AG04450 (cell line): ENCODE measurements at regions of chr3 and their contacts with region 1.

Region 1: DNA sequence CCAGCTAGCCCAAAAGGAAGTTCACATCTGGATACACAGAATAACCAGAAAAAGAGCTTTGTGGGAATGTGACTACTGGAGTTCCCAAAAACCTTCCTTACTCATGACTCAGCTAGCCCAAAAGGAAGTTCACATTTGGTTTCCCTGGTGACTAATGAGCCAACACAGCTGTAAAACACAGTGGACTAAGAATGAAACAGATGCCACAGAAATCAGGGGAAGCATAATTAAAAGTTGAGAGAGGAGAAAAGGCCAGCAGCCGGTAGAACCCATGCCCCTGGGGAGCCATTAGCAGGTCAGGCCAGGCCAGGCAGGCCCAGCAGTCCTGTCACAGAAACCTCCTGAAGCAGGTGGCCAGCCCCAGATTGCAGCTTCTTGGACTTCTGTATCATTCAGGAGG is 130.3 kb downstream of the GHSR start:
- DNase-seq: peak; percentile 84
- H3K4me3 ChIP-seq: no peak overlapping the region
- H3K27ac ChIP-seq: peak overlapping the region; percentile 91
- H3K27me3 ChIP-seq: no peaks in the 10 kb centered on the region
- CTCF ChIP-seq: no peak

Region 2: GRCh38 chr3:171806200-171807128 is 511.5 kb before region 1 on chr3:
- CTCF ChIA-PET with region 1: no interaction called
- POLR2A ChIA-PET with region 1: interaction called, 11 read pairs
- DNase-seq: peak; percentile 76
- H3K4me3 ChIP-seq: no peak overlapping the region
- H3K27ac ChIP-seq: peak overlapping the region; percentile 66
- H3K27me3 ChIP-seq: no peaks in the 10 kb centered on the region
- CTCF ChIP-seq: no peak

Region 3: GRCh38 chr3:172171396-172172075 is 146.4 kb before region 1 on chr3:
- CTCF ChIA-PET with region 1: no interaction called
- POLR2A ChIA-PET with region 1: no interaction called
- DNase-seq: no peak
- H3K4me3 ChIP-seq: no peak overlapping the region
- H3K27ac ChIP-seq: no peak overlapping the region
- H3K27me3 ChIP-seq: no peaks in the 10 kb centered on the region
- CTCF ChIP-seq: no peak